Mammary epithelial cell (primary cell): ENCODE measurements at regions of chr17 and their contacts with region 1.

Region 1: DNA sequence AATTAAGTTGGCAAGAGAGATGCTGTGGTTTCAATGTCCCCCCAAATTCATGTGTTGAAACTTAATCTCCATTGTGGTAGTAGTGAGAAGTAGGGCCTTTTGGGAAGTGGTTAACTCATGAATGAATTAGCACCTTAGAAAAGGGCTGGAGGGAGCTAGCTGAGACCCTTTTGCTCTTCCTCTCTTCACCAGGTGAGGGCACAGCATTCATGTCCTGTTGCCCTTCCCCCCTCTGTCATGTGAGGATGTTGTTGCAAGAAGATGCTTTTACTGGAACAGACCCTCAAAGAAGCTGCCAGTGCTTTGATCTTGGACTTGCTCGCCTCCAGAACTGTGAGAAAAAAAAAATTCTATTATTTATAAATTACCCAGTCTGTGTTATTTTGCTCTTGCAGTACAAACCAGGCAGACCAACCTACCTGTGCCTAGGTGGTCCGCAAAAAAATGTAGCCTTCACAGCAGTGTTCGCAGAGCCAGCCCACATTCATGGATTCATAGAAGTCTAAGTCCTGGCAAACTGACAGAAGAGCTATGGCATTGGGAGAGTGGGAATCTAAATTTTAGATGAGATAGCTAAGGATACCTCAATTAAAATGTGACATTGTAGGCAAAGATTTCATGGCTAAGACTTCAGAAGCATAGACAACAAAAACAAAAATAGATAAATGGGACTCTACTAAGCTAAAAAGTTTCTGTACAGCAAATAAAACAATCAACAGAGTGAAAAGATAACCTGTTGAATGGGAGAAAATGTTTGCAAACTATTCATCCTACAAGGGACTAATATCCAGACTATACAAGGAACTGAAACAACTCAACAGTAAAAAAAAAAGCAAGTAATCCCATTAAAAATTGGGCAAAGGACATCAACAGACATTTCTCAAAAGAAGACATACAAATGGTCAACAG is 32.0 kb upstream of the ABCA5 start:
- DNase-seq: no peak
- H3K4me3 ChIP-seq: no peak overlapping the region
- H3K27ac ChIP-seq: no peak overlapping the region
- H3K4me1 ChIP-seq: no peaks in the 10 kb centered on the region
- H3K27me3 ChIP-seq: no peaks in the 10 kb centered on the region
- CTCF ChIP-seq: peak; percentile 2 to 26

Region 2: GRCh38 chr17:69300222-69300621 is 58.7 kb before region 1 on chr17:
- CTCF ChIA-PET with region 1: no interaction called
- dilution Hi-C with region 1: loop called (anchors 5 kb)
- in situ Hi-C with region 1: no loop called
- intact Hi-C with region 1: no loop called
- DNase-seq: no peak
- H3K4me3 ChIP-seq: no peak overlapping the region
- H3K27ac ChIP-seq: no peak overlapping the region
- H3K4me1 ChIP-seq: no peaks in the 10 kb centered on the region
- H3K27me3 ChIP-seq: no peaks in the 10 kb centered on the region
- CTCF ChIP-seq: no peak

Region 3: GRCh38 chr17:69404382-69404781 is 45.4 kb after region 1 on chr17:
- CTCF ChIA-PET with region 1: no interaction called
- dilution Hi-C with region 1: no loop called
- in situ Hi-C with region 1: no loop called
- intact Hi-C with region 1: loop called (anchors 5 kb)
- DNase-seq: no peak
- H3K4me3 ChIP-seq: no peak overlapping the region
- H3K27ac ChIP-seq: no peak overlapping the region
- H3K4me1 ChIP-seq: no peaks in the 10 kb centered on the region
- H3K27me3 ChIP-seq: no peaks in the 10 kb centered on the region
- CTCF ChIP-seq: no peak